ENCODE measurements at regions of chr10 and their contacts with region 1.

Region 1: DNA sequence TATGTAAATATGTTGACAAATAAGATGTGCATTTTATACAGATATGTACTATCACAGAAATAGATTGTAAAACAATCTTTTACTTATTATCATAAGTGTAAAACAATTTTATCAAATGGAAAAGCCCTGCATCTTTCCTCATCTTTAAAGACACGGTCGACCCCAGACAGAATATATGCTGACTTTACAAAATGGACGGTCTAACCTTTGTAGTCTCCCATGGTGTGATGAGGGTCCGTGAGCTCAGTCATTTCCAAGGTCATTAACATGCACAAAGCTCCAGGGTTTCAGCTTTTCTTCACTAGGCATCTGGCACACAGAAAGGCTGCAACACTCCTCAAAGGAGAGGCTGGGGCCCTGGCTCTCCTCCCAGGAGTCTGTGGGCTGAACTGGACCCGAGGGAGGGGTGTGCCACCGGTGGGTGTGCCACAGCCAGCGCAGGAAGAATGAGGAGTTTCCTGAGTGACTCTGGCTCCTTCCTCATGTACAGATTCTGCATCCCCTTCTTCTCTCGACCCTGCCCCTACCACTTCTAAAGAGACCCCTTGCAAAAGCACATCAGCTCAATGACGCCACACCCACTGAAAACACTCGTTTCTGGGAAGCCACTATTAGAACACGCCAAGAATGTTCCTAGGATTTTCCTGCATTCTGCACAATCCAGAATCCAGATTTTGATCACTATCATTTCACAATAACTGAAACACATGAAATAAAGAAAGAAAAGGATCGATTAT is 26.2 kb upstream of the ABLIM1 start:
- DNase-seq: peak; percentile 69
- H3K4me3 ChIP-seq: peak overlapping the region in 2 of 4 donors; percentile 1 to 6
- H3K27ac ChIP-seq: peak overlapping the region; percentile 49 to 76 (median 68)
- H3K4me1 ChIP-seq: peaks cover 0 to 49% (median 30%) of the 10 kb centered on the region in 4 donors
- H3K27me3 ChIP-seq: no peaks in the 10 kb centered on the region
- CTCF ChIP-seq: no peak
- EP300 ChIP-seq: no peak
- POLR2A ChIP-seq: no peak

Region 2: DNA sequence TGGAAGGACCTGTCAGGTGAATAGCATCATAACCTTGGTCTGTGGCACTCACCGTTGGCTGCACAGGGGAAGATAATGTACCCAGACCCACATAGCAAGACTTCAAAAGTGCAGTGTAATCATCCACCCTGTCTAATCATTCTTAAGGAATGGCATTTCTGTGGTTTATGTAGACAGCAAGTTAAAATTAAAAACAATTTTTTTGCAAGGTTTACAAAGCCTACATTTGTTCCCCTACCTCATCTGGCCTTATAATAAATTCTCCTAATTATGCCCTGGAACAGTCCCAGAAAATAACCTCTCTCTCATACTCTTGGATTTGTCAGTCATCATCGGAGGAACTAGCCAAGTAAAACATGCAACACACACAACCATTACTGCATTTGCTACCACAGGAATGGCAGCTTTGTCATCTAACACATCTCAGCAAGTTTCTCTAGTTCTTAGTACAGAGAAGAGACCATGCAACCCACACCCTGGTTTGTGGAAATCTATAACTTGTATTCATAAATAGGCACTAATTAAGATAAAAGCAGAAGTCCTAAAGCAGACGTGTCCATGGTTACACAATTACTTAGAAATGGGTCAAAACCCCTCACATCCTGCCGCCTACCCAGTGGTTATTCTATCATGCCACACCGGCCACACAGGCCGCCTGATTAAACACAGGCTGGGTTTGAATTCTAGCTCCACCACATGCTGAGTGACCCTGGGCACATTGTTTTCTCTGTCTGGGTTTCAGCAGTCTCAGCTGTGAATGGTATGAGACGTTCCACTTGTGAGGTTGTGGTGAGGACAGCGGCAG is 45.2 kb before region 1 on chr10:
- intact Hi-C with region 1: loop called (anchors 5 kb)
- DNase-seq: no peak
- H3K4me3 ChIP-seq: no peak overlapping the region
- H3K27ac ChIP-seq: no peak overlapping the region
- H3K4me1 ChIP-seq: peaks cover 0 to 13% (median 5%) of the 10 kb centered on the region in 4 donors
- H3K27me3 ChIP-seq: no peaks in the 10 kb centered on the region
- CTCF ChIP-seq: no peak
- EP300 ChIP-seq: no peak
- POLR2A ChIP-seq: no peak

Measured in sigmoid colon (tissue), 7 donors.